Left ventricle myocardium inferior (tissue), 1 donor: ENCODE measurements at regions of chr10 and their contacts with region 1.

Region 1: GRCh38 chr10:114470956-114471905 is 66.9 kb upstream of the AFAP1L2 start:
- DNase-seq: peak; percentile 52
- H3K4me3 ChIP-seq: no peak overlapping the region
- H3K27ac ChIP-seq: peak overlapping the region; percentile 92
- H3K4me1 ChIP-seq: peaks cover 61% of the 10 kb centered on the region
- H3K27me3 ChIP-seq: no peaks in the 10 kb centered on the region
- CTCF ChIP-seq: peak; percentile 94

Region 2: GRCh38 chr10:114550756-114551635 is 79.8 kb after region 1 on chr10:
- intact Hi-C with region 1: loop called (anchors 5 kb)
- DNase-seq: peak; percentile 65
- H3K4me3 ChIP-seq: peak overlapping the region; percentile 41
- H3K27ac ChIP-seq: peak overlapping the region; percentile 82
- H3K4me1 ChIP-seq: peaks cover 100% of the 10 kb centered on the region
- H3K27me3 ChIP-seq: no peaks in the 10 kb centered on the region
- CTCF ChIP-seq: peak; percentile 58

Region 3: GRCh38 chr10:114703377-114704107 is 232.3 kb after region 1 on chr10:
- intact Hi-C with region 1: loop called (anchors 10 kb)
- DNase-seq: no peak
- H3K4me3 ChIP-seq: no peak overlapping the region
- H3K27ac ChIP-seq: peak overlapping the region; percentile 1
- H3K4me1 ChIP-seq: peaks cover 52% of the 10 kb centered on the region
- H3K27me3 ChIP-seq: no peaks in the 10 kb centered on the region
- CTCF ChIP-seq: peak; percentile 70

Region 4: GRCh38 chr10:114779803-114780609 is 308.8 kb after region 1 on chr10:
- intact Hi-C with region 1: loop called (anchors 10 kb)
- DNase-seq: no peak
- H3K4me3 ChIP-seq: no peak overlapping the region
- H3K27ac ChIP-seq: peak overlapping the region; percentile 40
- H3K4me1 ChIP-seq: peaks cover 41% of the 10 kb centered on the region
- H3K27me3 ChIP-seq: no peaks in the 10 kb centered on the region
- CTCF ChIP-seq: no peak